Panc1 (cell line): ENCODE measurements at regions of chr10 and their contacts with region 1.

Region 1: DNA sequence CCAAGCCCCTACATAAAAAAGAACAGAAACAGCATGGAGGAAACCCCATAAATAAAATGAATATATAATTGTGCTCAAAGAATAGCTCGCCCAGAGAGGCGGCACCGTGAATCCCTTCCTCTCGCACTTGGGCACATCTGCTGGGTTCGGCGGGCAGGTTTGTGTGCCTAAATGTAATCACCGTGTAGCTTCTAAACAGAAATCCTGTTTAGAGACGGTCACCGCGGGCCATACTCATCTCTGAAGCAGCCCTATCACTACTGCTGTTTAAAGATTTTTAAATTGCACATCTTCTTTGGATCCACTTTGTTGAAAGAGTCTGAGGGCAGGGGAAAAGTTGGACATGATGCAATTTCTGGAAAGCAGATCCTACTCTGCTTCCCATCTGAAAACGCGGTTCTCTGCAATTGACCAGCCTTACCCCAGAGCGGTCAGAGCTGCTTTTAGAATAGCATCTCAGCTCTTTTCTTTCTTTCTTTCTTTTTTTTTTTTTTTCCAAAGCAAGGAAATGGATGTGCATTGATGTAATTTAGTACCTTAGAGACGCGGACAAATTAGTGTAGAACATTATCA is 6.4 kb downstream of the DRGX start:
- DNase-seq: no peak
- ATAC-seq: no peak
- H3K4me3 ChIP-seq: no peak overlapping the region
- H3K27ac ChIP-seq: no peak overlapping the region
- H3K4me1 ChIP-seq: no peaks in the 10 kb centered on the region
- H3K27me3 ChIP-seq: peaks cover 31% of the 10 kb centered on the region
- CTCF ChIP-seq: no peak

Region 2: DNA sequence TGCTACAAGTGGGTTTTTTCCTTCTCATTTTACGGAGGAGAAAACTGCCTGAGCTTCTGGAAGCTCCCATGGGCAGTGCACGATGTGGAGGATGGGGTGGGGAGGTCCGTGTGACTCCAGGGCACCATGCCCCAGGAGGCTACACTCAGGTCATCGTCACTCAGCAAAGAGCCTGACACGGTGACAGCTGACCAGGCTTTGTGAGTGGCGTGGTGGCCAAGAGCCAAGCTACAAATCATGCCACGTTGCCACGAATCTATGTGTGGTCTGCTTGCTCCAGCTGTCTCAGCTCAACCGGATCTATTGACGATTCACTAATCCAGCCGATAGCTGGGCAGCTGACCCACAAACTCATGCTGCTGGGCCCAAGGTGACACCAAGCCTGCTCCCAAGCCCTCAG is 118.1 kb before region 1 on chr10:
- CTCF ChIA-PET with region 1: no interaction called
- POLR2A ChIA-PET with region 1: no interaction called
- in situ Hi-C with region 1: no loop called
- intact Hi-C with region 1: no loop called
- DNase-seq: no peak
- ATAC-seq: no peak
- H3K4me3 ChIP-seq: no peak overlapping the region
- H3K27ac ChIP-seq: no peak overlapping the region
- H3K4me1 ChIP-seq: no peaks in the 10 kb centered on the region
- H3K27me3 ChIP-seq: no peaks in the 10 kb centered on the region; the same call in 1 of the 2 replicates
- CTCF ChIP-seq: no peak

Region 3: GRCh38 chr10:49347342-49347741 is 42.1 kb before region 1 on chr10:
- CTCF ChIA-PET with region 1: no interaction called
- POLR2A ChIA-PET with region 1: interaction called, 13 read pairs
- in situ Hi-C with region 1: no loop called
- intact Hi-C with region 1: no loop called
- DNase-seq: no peak
- ATAC-seq: no peak
- H3K4me3 ChIP-seq: no peak overlapping the region
- H3K27ac ChIP-seq: no peak overlapping the region
- H3K4me1 ChIP-seq: no peaks in the 10 kb centered on the region
- H3K27me3 ChIP-seq: no peaks in the 10 kb centered on the region
- CTCF ChIP-seq: no peak

Region 4: GRCh38 chr10:49512121-49512809 is 122.8 kb after region 1 on chr10:
- CTCF ChIA-PET with region 1: no interaction called
- POLR2A ChIA-PET with region 1: no interaction called
- in situ Hi-C with region 1: no loop called
- intact Hi-C with region 1: no loop called
- DNase-seq: peak; percentile 24
- ATAC-seq: peak; percentile 85
- H3K4me3 ChIP-seq: no peak overlapping the region
- H3K27ac ChIP-seq: no peak overlapping the region
- H3K4me1 ChIP-seq: no peaks in the 10 kb centered on the region
- H3K27me3 ChIP-seq: no peaks in the 10 kb centered on the region
- CTCF ChIP-seq: peak; percentile 82